ENCODE measurements at regions of chr3 and their contacts with region 1.

Region 1: GRCh38 chr3:56801662-56802377 is at the start of gene ARHGEF3:
- DNase-seq: peak; percentile 86 to 90 (median 86)
- H3K4me3 ChIP-seq: peak within 1 kb of the TSS; percentile 86 to 87
- H3K4me3 Mint-ChIP-seq: peak within 1 kb of the TSS; percentile 92 to 99 (median 96)
- H3K27ac ChIP-seq: peak within 1 kb of the TSS; percentile 79
- H3K27ac Mint-ChIP-seq: peak within 1 kb of the TSS; percentile 85 to 98 (median 92)
- H3K4me1 ChIP-seq: peaks cover 38% of the 10 kb centered on the region
- H3K4me1 Mint-ChIP-seq: peaks cover 33 to 64% (median 43%) of the 10 kb centered on the region in 4 donors
- H3K27me3 ChIP-seq: no peaks in the 10 kb centered on the region
- H3K27me3 Mint-ChIP-seq: no peaks in the 10 kb centered on the region
- total RNA-seq, gene ARHGEF3: 120 TPM

Region 2: GRCh38 chr3:56682462-56683121 is 119.2 kb before region 1 on chr3:
- CTCF ChIA-PET with region 1: interaction called, 11 read pairs
- POLR2A ChIA-PET with region 1: interaction called, 45 read pairs
- intact Hi-C with region 1: loop called (anchors 1 kb)
- DNase-seq: peak; percentile 79 to 86 (median 85)
- H3K4me3 ChIP-seq: peak overlapping the region; percentile 76 to 90
- H3K4me3 Mint-ChIP-seq: peak overlapping the region; percentile 91 to 98 (median 94)
- H3K27ac ChIP-seq: peak overlapping the region; percentile 96
- H3K27ac Mint-ChIP-seq: peak overlapping the region; percentile 93 to 98 (median 96)
- H3K4me1 ChIP-seq: peaks cover 55% of the 10 kb centered on the region
- H3K4me1 Mint-ChIP-seq: peaks cover 28 to 59% (median 42%) of the 10 kb centered on the region in 4 donors
- H3K27me3 ChIP-seq: no peaks in the 10 kb centered on the region
- H3K27me3 Mint-ChIP-seq: no peaks in the 10 kb centered on the region

Region 3: DNA sequence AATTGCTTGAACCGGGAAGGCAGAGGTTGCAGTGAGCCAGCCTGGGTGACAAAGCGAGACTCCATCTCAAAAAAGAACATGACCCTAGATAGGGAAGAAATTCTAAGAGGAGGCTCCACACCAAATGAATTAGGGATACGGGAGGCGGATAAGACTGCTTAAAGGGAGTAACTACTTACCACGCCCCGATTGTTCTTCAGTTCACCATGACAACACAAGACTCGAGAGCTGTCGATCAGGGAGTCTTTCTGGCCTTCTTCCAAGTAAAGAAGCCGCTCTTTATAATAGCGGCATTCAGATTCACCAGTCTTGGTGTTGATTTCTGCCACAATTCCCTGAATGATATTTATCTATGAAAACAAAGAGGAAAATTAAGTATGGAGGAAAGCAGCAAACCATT is 64.8 kb before region 1 on chr3:
- CTCF ChIA-PET with region 1: interaction called, 267 read pairs
- POLR2A ChIA-PET with region 1: interaction called, 16 read pairs
- intact Hi-C with region 1: no loop called
- DNase-seq: no peak
- H3K4me3 ChIP-seq: no peak overlapping the region
- H3K4me3 Mint-ChIP-seq: no peak overlapping the region
- H3K27ac ChIP-seq: no peak overlapping the region
- H3K27ac Mint-ChIP-seq: peak overlapping the region in 1 of 7 donors; percentile 29
- H3K4me1 ChIP-seq: peaks cover 27% of the 10 kb centered on the region
- H3K4me1 Mint-ChIP-seq: peaks cover 19 to 38% (median 23%) of the 10 kb centered on the region in 4 donors
- H3K27me3 ChIP-seq: no peaks in the 10 kb centered on the region
- H3K27me3 Mint-ChIP-seq: no peaks in the 10 kb centered on the region

Region 4: DNA sequence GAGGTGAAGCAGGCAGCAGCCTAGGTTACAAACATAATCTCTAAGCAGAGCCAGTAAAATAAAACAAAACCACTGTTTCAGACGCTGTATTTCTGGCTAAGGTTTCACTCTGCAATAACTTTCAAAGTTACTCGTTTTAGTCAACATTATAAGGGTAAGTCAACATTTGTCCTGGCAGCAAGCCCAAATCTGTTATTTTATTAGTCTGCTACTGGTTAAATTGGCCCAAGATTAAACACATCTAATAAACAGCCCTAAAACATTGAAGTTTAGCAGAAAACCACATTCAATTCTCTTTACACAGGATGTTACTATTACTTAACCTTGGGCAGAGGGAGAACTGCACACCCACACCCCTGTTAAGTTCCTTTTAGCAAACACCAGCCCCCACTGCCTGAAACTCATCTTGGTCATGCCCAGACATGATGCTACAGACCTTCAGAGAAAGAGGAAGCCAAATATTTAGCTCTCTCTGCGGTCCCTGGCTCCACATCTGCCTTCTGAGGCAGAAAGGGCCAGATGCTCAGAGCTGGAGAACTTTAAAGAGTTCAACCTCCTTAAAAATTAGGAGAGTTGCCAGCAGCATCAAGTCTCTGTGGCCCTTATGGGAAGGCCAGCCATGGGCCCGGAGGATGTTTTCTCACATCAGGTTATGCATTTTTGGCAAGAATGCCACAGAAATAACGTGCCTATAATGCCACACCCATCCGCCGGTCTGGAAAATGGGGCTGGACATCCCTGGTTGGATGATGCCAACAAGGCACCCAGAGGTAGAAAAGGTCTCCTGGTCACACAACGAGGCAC is 18.0 kb before region 1 on chr3:
- CTCF ChIA-PET with region 1: interaction called, 127 read pairs
- POLR2A ChIA-PET with region 1: interaction called, 218 read pairs
- intact Hi-C with region 1: loop called (anchors 1 kb)
- DNase-seq: peak; percentile 80 to 90 (median 84)
- H3K4me3 ChIP-seq: peak overlapping the region; percentile 26 to 45
- H3K4me3 Mint-ChIP-seq: peak overlapping the region; percentile 73 to 87 (median 84)
- H3K27ac ChIP-seq: peak overlapping the region; percentile 69
- H3K27ac Mint-ChIP-seq: peak overlapping the region; percentile 85 to 97 (median 94)
- H3K4me1 ChIP-seq: peaks cover 100% of the 10 kb centered on the region
- H3K4me1 Mint-ChIP-seq: peaks cover 85 to 100% (median 94%) of the 10 kb centered on the region in 4 donors
- H3K27me3 ChIP-seq: no peaks in the 10 kb centered on the region
- H3K27me3 Mint-ChIP-seq: no peaks in the 10 kb centered on the region

Region 5: GRCh38 chr3:56839784-56840715 is 38.2 kb after region 1 on chr3:
- CTCF ChIA-PET with region 1: interaction called, 10 read pairs
- POLR2A ChIA-PET with region 1: no interaction called
- intact Hi-C with region 1: no loop called
- DNase-seq: no peak
- H3K4me3 ChIP-seq: no peak overlapping the region
- H3K4me3 Mint-ChIP-seq: no peak overlapping the region
- H3K27ac ChIP-seq: no peak overlapping the region
- H3K27ac Mint-ChIP-seq: peak overlapping the region in 2 of 7 donors; percentile 22 to 62
- H3K4me1 ChIP-seq: no peaks in the 10 kb centered on the region
- H3K4me1 Mint-ChIP-seq: peaks cover 23 to 49% (median 35%) of the 10 kb centered on the region in 4 donors
- H3K27me3 ChIP-seq: no peaks in the 10 kb centered on the region
- H3K27me3 Mint-ChIP-seq: no peaks in the 10 kb centered on the region

Region 6: GRCh38 chr3:56915966-56916586 is 114.3 kb after region 1 on chr3:
- CTCF ChIA-PET with region 1: interaction called, 95 read pairs
- POLR2A ChIA-PET with region 1: interaction called, 193 read pairs
- intact Hi-C with region 1: loop called (anchors 1 kb)
- DNase-seq: peak; percentile 71 to 89 (median 78)
- H3K4me3 ChIP-seq: peak overlapping the region; percentile 90 to 92
- H3K4me3 Mint-ChIP-seq: peak overlapping the region; percentile 91 to 96 (median 94)
- H3K27ac ChIP-seq: peak overlapping the region; percentile 78
- H3K27ac Mint-ChIP-seq: peak overlapping the region; percentile 92 to 98 (median 94)
- H3K4me1 ChIP-seq: peaks cover 77% of the 10 kb centered on the region
- H3K4me1 Mint-ChIP-seq: peaks cover 64 to 92% (median 72%) of the 10 kb centered on the region in 4 donors
- H3K27me3 ChIP-seq: no peaks in the 10 kb centered on the region
- H3K27me3 Mint-ChIP-seq: no peaks in the 10 kb centered on the region

Region 7: DNA sequence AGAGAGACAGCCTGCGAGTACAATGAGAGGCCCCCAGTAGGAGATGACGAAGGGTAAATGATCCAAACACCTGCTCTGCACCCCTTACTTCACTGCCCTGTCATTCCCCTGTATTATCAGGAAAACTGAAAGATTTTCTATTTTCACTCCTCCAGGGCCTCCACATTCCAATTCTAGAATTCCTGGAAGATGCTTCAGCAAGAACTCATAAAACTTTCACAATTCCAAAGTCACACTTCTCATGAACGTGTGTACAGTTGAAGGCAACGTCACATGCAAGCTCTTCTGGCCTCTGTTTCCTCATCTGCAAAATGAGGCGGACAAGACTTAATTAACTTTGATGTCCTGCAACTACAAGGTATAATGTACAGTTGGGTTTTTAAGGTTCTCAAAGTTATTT is 195.9 kb after region 1 on chr3:
- CTCF ChIA-PET with region 1: interaction called, 197 read pairs
- POLR2A ChIA-PET with region 1: no interaction called
- intact Hi-C with region 1: no loop called
- DNase-seq: no peak
- H3K4me3 ChIP-seq: no peak overlapping the region
- H3K4me3 Mint-ChIP-seq: no peak overlapping the region
- H3K27ac ChIP-seq: no peak overlapping the region
- H3K27ac Mint-ChIP-seq: peak overlapping the region in 1 of 7 donors; percentile 90
- H3K4me1 ChIP-seq: no peaks in the 10 kb centered on the region
- H3K4me1 Mint-ChIP-seq: peaks cover 3 to 6% (median 4%) of the 10 kb centered on the region in 4 donors
- H3K27me3 ChIP-seq: no peaks in the 10 kb centered on the region
- H3K27me3 Mint-ChIP-seq: peaks cover 1 to 3% of the 10 kb centered on the region in 2 donors

Region 8: DNA sequence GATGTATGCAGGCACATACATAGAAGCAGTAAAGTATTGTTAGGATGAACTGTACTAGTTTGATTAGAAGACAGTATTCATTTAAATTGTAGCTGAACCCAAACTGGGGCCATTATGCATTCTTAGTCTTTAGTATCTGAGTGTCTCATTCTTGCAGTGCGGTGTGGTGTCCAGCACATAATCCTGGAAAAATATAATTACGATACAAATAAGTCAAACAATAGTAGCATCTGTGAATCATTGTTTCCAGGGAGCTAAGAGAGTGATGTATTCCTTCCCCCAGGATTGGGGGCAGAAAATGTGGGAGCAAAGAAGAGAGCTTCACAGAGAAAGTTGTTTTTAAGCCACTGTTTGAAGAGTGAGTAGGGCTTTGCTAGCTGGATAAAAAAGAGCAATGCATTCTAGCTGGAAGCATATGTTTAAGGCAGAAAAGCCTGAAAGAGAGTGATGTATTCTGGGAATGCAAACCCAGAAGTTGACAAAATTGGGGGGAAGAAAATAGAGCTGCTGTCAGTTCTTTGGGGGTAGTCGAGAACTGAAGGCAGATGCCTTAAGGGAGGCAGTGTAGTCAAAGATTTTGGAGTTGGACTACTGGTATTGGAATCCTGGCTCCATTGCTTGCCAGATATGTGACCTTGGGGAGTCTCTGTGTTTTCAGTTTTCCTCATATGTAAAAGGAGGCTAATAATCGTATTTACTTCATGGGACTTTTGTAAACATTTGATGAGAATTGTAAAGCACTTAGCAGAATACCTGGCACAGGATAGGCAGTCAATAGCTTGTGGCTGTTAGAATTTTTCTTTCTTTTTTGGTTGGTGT is 968.4 kb after region 1 on chr3:
- CTCF ChIA-PET with region 1: no interaction called
- POLR2A ChIA-PET with region 1: no interaction called
- intact Hi-C with region 1: no loop called
- DNase-seq: no peak
- H3K4me3 ChIP-seq: no peak overlapping the region
- H3K4me3 Mint-ChIP-seq: no peak overlapping the region
- H3K27ac ChIP-seq: no peak overlapping the region
- H3K27ac Mint-ChIP-seq: peak overlapping the region in 3 of 7 donors; percentile 17 to 32 (median 22)
- H3K4me1 ChIP-seq: peaks cover 10% of the 10 kb centered on the region
- H3K4me1 Mint-ChIP-seq: peaks cover 36 to 56% (median 44%) of the 10 kb centered on the region in 4 donors
- H3K27me3 ChIP-seq: no peaks in the 10 kb centered on the region
- H3K27me3 Mint-ChIP-seq: no peaks in the 10 kb centered on the region